ENCODE measurements at regions of chr4 and their contacts with region 1.

Region 1: DNA sequence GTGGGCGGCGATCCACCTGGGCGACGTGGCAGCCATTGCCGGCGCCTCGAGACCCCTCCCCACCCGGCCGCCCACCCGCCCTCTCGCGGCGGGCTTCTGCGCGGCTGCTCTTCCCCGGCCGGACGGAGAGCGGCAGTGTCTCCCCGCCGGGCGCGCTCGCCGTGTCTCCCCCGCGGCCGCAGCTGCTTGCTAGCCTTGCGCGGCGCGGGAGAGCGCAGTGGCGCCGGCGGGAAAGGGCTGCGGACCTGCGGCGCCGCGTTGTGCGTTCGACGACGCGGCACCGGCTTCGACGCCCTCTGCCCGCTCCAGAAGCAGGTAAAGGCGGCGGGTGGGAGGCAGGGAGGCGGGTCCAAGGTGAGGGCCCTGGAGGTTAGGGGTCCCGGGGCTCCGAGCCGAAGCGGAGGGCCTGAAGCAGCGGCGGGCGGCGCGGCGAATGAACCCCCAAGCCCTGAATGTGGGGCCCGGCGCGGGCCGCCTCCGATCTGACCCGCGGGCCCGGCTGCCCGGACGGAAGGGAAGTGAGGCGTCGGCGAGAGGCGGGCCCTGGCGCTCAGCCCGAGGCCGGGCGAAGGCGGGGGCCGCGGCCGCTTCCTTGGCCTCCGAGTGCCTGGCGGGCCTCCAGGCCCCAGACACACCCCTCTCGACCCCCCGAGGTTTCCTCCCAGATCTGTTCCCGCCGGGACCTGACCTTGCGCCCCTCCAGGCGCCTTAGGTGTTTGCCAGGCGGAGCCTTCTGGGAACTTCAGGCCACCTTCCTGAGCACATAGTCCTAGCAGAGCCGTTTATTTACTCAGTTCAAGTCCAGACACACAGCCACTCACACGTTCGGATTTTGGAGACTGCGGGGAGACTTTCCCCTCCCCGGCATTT is at the start of gene N4BP2:
- DNase-seq: peak; percentile 88 to 98 (median 92)
- ATAC-seq: peak; percentile 76
- H3K4me3 ChIP-seq: peak within 1 kb of the TSS; percentile 61 to 78
- H3K27ac ChIP-seq: peak within 1 kb of the TSS; percentile 100
- H3K4me1 ChIP-seq: peaks cover 0 to 29% of the 10 kb centered on the region in 2 donors
- H3K27me3 ChIP-seq: no peaks in the 10 kb centered on the region
- CTCF ChIP-seq: peak; percentile 56 to 66
- polyA plus RNA-seq, gene N4BP2: 16.6 to 22.3 (median 19.6) TPM

Region 2: DNA sequence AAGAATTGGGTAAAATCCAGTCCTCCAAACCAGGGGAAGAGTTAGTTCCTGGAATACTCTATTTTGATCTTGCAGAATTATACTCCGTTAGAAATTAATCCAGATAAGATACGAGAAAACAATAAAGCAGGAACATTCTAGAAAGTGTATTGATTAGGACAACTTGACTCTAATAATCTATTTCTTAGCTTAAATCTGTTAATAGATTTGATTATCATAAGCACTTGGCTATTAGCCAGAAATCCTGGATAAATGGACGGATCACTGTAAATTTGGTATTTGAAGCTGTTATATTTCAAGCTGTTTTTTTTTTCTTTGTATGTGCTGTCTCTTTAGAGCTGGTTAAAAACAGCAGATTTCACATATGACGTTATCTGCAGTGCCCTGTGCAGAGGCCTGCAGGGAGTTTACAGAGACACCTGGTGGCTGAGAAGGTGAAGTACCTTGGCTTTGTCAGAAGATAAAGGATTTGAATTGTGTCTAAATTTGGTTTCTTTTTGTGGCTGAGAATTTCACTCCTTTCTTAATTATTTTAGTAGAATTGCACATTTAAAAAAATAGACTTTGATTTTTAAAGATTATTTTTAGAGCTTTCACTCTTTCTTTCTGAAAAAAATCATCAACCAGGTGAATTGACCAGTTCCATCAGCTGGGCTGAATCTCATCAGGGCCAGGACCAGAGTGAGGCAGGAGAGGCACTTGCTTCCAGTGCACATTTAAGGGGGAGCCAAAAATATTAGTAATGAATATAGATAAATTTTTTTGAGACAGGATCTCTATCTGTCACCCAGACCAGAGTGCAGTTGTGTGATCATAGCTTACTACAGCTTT is 268.5 kb after region 1 on chr4:
- intact Hi-C with region 1: loop called in 1 of 2 experiments (anchors 10 kb)
- DNase-seq: peak in 1 of 4 donors; percentile 72
- ATAC-seq: peak; percentile 91
- H3K4me3 ChIP-seq: no peak overlapping the region
- H3K27ac ChIP-seq: no peak overlapping the region
- H3K4me1 ChIP-seq: peaks cover 0 to 21% of the 10 kb centered on the region in 2 donors
- H3K27me3 ChIP-seq: no peaks in the 10 kb centered on the region
- CTCF ChIP-seq: peak; percentile 69 to 76

Measured in left lung (tissue), 14 donors.